Activated T-helper 1 cell treated with anti-CD3 and anti-CD28 coated beads, Interleukin-12 subunit alpha, Interleukin-12 subunit beta, Interleukin-2, Interleukin-4 antibody, amounts not matched to agents 30 ng/mL and 10 ng/mL and 1 ng/mL, durations not matched to agents 14 hours and 24 hours and 36 hours (primary cell): ENCODE measurements at regions of chr10 and their contacts with region 1.

Region 1: DNA sequence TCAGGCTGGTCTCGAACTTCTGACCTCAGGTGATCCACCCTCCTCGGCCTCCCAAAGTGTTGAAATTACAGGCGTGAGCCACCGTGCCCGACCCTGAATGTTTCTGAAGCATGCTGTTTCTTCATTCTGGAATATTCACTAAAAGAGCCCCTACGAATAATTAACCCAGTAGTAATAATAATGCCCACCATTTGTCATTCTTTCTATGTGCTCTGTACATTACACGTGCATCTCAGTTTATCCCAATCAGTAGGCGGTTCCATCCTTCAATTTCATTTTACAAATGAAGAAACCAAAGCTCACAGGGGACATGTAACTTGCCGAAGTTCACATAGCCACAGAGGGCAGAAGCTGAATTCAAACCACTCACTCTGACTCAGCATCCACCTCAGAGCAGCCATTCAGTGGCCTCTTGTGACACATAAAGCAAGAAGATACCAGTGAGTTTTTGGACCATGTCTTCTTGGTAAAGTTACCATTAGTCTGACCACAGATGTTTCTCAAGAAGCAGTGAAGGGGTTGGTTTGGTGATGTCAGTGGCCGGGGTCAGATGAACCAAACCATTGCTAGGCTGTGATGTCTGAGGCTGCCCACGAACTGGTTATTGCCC is 71.9 kb upstream of the DUSP5 start:
- DNase-seq: peak; percentile 53
- H3K4me3 Mint-ChIP-seq: peak overlapping the region; percentile 34
- H3K27ac Mint-ChIP-seq: peak overlapping the region; percentile 91
- H3K4me1 Mint-ChIP-seq: peaks cover 70% of the 10 kb centered on the region
- H3K27me3 Mint-ChIP-seq: no peaks in the 10 kb centered on the region

Region 2: DNA sequence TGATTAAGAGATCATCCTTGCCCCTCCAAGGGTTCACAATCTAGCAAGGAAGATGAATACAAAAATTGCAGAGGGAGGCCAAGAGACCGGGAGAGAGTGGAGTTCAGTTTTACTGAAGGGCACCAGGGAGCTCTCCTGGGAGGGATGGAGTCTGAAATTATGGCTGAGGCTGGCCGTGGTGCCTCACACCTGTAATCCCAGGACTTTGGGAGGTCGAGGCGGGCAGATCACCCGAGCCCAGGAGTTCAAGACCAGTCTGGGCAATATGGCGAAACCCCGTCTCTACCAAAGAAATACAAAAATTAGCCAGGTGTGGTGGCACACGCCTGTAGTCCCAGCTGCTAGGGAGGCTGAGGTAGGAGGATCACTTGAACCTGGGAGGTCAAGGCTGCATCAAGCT is 269.7 kb before region 1 on chr10:
- intact Hi-C with region 1: loop called (anchors 1 kb)
- DNase-seq: no peak
- H3K4me3 Mint-ChIP-seq: peak overlapping the region; percentile 50
- H3K27ac Mint-ChIP-seq: no peak overlapping the region
- H3K4me1 Mint-ChIP-seq: peaks cover 49% of the 10 kb centered on the region
- H3K27me3 Mint-ChIP-seq: peaks cover 63% of the 10 kb centered on the region

Region 3: DNA sequence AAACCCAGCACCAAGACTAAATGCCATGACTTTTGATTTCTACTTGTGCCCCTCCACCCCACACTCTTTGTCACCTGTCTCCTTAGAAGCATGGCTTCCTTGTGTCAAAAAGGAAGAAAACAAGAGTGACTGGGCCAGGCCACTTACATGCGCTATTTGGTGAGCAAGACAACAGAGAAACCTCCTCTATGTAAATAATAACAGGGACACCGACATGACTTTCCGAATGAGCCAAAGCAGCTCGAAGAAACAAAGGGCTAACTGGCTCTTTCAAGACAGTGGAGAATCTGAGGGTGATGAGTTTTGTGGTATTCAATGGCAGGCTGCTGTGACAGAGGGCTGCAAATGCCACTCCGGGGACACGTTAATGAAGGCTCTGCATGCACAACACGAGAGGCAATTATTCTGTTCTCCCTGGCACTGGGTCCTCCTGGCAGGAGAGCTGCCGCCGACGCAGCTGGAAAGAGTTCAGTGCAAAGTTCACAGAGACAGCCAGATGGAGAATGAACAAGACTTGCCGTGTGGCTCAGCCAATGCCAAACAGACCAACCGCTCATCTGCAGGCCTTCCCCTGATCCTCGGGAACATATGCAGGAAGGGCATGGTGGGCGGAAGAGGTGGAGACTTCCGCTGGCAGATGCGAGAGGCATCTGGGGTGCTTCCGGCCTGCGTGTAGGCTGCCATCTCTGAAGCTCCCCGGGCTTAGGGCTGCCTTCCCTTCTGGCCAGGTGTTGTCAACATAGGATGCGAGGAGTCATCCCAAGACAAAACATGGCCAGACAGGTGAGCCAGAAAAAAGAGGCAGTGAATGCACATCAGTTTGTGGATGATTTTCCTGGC is 62.0 kb before region 1 on chr10:
- intact Hi-C with region 1: loop called (anchors 2 kb)
- DNase-seq: no peak
- H3K4me3 Mint-ChIP-seq: peak overlapping the region; percentile 34
- H3K27ac Mint-ChIP-seq: peak overlapping the region; percentile 83
- H3K4me1 Mint-ChIP-seq: peaks cover 84% of the 10 kb centered on the region
- H3K27me3 Mint-ChIP-seq: no peaks in the 10 kb centered on the region

Region 4: GRCh38 chr10:110414563-110415309 is 11.1 kb before region 1 on chr10:
- intact Hi-C with region 1: loop called (anchors 1 kb)
- DNase-seq: peak; percentile 87
- H3K4me3 Mint-ChIP-seq: peak overlapping the region; percentile 56
- H3K27ac Mint-ChIP-seq: peak overlapping the region; percentile 97
- H3K4me1 Mint-ChIP-seq: peaks cover 74% of the 10 kb centered on the region
- H3K27me3 Mint-ChIP-seq: peaks cover 1% of the 10 kb centered on the region

Region 5: GRCh38 chr10:110528224-110528997 is 102.6 kb after region 1 on chr10:
- intact Hi-C with region 1: loop called (anchors 1 kb)
- DNase-seq: no peak
- H3K4me3 Mint-ChIP-seq: peak overlapping the region; percentile 64
- H3K27ac Mint-ChIP-seq: peak overlapping the region; percentile 94
- H3K4me1 Mint-ChIP-seq: peaks cover 83% of the 10 kb centered on the region
- H3K27me3 Mint-ChIP-seq: no peaks in the 10 kb centered on the region

Region 6: DNA sequence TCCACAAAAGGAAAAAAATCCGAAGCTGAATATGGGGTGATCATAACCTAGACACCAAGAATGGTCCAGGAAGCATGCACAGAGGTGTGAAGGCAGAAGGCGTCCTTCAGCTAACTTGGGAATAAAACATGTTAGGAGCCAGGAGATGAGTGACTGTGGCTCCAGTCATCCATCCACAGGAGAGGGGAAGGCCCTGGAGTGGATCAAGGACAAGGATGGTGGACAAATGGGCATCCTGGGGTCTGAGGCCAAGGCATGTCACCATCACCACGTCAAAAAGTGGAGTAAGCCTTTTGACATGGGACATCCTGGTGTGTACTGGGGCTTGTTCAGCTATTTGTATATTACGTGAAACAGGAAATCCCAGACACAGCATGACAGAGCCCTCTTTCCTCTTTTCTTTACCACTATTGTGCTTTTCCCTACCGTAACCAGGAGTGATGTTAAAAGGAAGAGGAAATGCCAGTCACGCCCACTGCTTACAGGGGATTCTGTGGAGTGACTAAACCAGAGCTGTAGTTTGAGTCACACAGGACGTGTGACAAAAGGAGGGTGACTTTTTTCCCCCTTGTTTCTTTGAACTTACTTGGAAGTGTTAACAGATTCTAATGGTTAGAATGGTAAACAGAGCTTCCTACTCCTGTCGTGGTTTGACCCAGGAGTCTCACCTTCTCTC is 1963.5 kb after region 1 on chr10:
- intact Hi-C with region 1: loop called (anchors 5 kb)
- DNase-seq: peak; percentile 55
- H3K4me3 Mint-ChIP-seq: peak overlapping the region; percentile 57
- H3K27ac Mint-ChIP-seq: peak overlapping the region; percentile 88
- H3K4me1 Mint-ChIP-seq: peaks cover 67% of the 10 kb centered on the region
- H3K27me3 Mint-ChIP-seq: no peaks in the 10 kb centered on the region